GM12878 (cell line): ENCODE measurements at regions of chr20 and their contacts with region 1.

Region 1: GRCh38 chr20:38406476-38406875 is 28.7 kb downstream of the SNHG17 start:
- DNase-seq: no peak
- ATAC-seq: no peak
- H3K4me3 ChIP-seq: no peak overlapping the region
- H3K27ac ChIP-seq: no peak overlapping the region
- H3K4me1 ChIP-seq: no peaks in the 10 kb centered on the region
- H3K27me3 ChIP-seq: no peaks in the 10 kb centered on the region
- CTCF ChIP-seq: no peak
- EP300 ChIP-seq: no peak
- POLR2A ChIP-seq: no peak
- RAD21 ChIP-seq: no peak

Region 2: DNA sequence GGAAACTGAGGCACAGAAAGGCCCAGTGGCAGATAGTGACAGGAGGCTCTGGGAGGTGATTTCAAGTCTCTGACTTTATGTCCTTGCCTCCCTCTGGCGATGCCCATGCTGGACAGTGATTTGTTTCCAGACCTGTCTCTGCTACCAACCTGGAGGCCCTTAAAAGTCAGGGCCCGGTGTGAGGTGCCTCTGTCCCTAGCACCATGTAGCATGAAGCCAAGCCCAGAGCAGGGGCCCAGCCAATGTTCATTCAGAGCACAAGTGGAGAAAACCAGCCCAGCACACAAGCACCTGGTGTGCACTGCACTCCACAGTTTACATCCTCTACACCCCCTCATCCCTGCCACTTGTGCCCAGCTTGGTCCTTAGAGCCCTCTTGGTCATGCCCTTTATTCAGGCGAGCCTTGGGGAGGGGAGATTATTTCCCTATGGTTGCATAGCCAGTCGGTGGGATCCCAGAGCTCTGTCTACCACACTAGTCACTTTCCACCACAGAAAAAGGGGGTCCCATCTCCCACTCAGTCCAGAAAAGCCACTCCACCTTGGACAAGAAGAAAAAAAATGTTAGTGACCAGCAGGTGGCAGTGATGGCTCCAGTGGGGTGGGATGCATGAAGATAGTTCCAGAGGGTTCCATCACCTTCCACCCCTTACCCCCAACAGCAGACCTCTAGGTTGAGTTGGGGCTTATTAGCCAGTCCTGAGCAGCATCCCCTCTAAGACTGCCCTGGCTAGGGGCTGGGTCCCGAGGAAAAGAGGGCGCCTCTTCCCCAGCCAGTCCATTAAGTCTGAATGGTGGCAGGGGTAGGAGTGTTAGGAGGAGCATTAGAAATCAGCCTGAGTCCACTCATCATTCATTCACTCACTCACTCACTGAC is 176.9 kb before region 1 on chr20:
- CTCF ChIA-PET with region 1: interaction called, 7 read pairs
- POLR2A ChIA-PET with region 1: no interaction called
- RAD21 ChIA-PET with region 1: interaction called, 5 read pairs
- SMC1A ChIA-PET with region 1: interaction called, 5 read pairs
- in situ Hi-C with region 1: no loop called
- intact Hi-C with region 1: loop called (anchors 5 kb)
- DNase-seq: no peak
- ATAC-seq: 0 out of 3 replicates have a peak, but pooled peaks have one; percentile 36
- H3K4me3 ChIP-seq: no peak overlapping the region
- H3K27ac ChIP-seq: no peak overlapping the region
- H3K4me1 ChIP-seq: no peaks in the 10 kb centered on the region
- H3K27me3 ChIP-seq: no peaks in the 10 kb centered on the region; a peak in 2 of 4 replicates
- CTCF ChIP-seq: peak; percentile 36 to 44 (median 42); a peak in 5 of 6 replicates
- EP300 ChIP-seq: no peak
- POLR2A ChIP-seq: no peak
- RAD21 ChIP-seq: peak; percentile 40; the same call in 1 of the 2 replicates